Psoas muscle (tissue), 8 donors: ENCODE measurements at regions of chr2 and their contacts with region 1.

Region 1: DNA sequence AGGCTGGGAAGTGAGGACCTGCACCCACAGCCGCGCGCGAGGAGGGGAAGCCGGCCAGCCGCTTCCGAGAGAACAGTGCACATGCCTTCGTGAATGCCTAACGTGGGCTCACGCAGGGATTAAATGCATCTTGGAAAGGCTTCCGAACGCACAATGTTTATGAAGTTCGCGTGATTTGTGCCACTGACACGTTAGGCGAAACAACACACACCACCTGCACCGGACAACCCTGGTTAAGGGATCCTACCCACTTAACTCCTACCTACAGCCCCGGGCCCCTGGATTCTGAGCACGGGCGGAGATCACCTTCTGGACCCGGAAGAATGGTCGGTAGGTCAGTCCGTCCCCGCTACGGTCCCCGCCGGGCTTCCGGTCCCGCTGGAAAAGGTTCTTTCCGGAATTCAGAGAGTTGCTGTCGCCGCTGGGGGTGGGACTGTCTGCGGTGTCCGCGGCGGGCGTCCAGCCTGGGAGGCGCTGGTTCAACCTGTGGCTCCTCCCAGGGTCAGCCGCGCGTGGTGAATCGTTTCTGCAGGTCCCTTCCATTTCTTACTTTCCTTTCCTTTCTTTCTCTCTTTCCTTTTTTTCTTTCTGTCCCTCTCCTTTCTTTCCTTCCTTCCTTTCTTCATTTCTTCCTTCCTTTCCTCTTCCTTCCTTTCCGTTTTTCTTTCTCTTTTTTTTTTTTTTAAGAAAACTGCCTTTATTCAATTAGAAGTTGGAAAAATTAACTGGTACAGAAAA is at the start of gene MTIF2:
- DNase-seq: peak; percentile 98
- ATAC-seq: peak; percentile 99
- H3K4me3 ChIP-seq: peak within 1 kb of the TSS; percentile 89
- H3K27ac ChIP-seq: peak within 1 kb of the TSS; percentile 92
- H3K4me1 ChIP-seq: peaks cover 13% of the 10 kb centered on the region
- H3K27me3 ChIP-seq: no peaks in the 10 kb centered on the region
- CTCF ChIP-seq: peak; percentile 14
- total RNA-seq, gene MTIF2: 33.8 to 47.7 (median 37.2) TPM

Region 2: DNA sequence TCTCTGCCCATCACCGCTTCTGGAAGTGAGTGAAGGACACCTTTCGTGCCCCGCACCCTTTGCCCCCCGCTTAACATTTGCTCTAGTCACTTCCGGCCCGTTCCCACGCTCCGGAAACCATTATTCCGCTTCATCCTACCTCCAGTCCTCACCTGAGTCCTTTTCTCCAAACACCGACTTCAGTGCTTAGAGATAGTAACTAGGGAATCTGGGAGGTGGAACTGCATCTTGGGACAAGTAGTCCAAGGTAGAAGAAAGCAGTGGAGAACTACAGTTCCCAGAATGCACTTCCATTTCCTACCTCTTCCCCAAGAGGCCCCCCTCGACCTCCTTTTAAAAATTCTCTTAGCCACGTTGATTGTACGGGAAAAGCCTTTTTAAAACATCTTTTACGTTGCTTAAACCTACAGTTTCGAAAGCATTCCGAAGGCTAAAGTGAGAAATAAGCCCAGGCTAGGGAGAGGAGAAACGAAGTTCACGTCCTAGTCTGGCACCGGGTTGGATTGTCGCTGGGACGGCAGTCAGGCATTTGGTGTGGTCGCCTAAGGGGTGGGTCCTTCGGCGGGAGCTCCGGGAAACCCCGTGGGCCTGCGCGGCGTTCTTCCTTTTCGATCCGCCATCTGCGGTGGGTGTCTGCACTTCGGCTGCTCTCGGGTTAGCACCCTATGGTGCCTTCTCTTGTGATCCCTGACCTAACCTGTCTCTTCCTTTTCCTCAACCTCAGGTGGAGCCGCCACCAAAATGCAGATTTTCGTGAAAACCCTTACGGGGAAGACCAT is 36.8 kb before region 1 on chr2 and contains the starts of genes CLHC1 and RPS27A:
- intact Hi-C with region 1: loop called (anchors 2 to 5 kb)
- DNase-seq: peak; percentile 93 to 96
- ATAC-seq: peak; percentile 94 to 96 (median 95)
- H3K4me3 ChIP-seq: peak within 1 kb of the TSS; percentile 91
- H3K27ac ChIP-seq: peak within 1 kb of the TSS; percentile 93
- H3K4me1 ChIP-seq: peaks cover 15% of the 10 kb centered on the region
- H3K27me3 ChIP-seq: no peaks in the 10 kb centered on the region
- CTCF ChIP-seq: no peak
- total RNA-seq, gene CLHC1: 2.1 to 3.7 (median 2.8) TPM
- total RNA-seq, gene RPS27A: 360 to 487 (median 465) TPM

Region 3: GRCh38 chr2:55431982-55432627 is 163.0 kb after region 1 on chr2:
- intact Hi-C with region 1: loop called in 1 of 2 experiments (anchors 5 kb)
- DNase-seq: no peak
- ATAC-seq: peak in 2 of 4 donors; percentile 62 to 65
- H3K4me3 ChIP-seq: no peak overlapping the region
- H3K27ac ChIP-seq: no peak overlapping the region
- H3K4me1 ChIP-seq: no peaks in the 10 kb centered on the region
- H3K27me3 ChIP-seq: no peaks in the 10 kb centered on the region
- CTCF ChIP-seq: peak; percentile 65